ENCODE measurements at regions of chr1 and their contacts with region 1.

Region 1: GRCh38 chr1:207811920-207812720 is 60.3 kb downstream of the CD46 start:
- DNase-seq: peak; percentile 66 to 86 (median 77)
- ATAC-seq: peak; percentile 14 to 63 (median 40)
- H3K4me3 ChIP-seq: peak overlapping the region in 5 of 12 donors; percentile 5 to 35 (median 21)
- H3K27ac ChIP-seq: peak overlapping the region; percentile 56 to 98 (median 81)
- H3K4me1 ChIP-seq: peaks cover 28 to 100% (median 97%) of the 10 kb centered on the region in 12 donors
- H3K27me3 ChIP-seq: no peaks in the 10 kb centered on the region
- CTCF ChIP-seq: peak; percentile 30 to 70 (median 48)
- POLR2A ChIP-seq: no peak

Region 2: DNA sequence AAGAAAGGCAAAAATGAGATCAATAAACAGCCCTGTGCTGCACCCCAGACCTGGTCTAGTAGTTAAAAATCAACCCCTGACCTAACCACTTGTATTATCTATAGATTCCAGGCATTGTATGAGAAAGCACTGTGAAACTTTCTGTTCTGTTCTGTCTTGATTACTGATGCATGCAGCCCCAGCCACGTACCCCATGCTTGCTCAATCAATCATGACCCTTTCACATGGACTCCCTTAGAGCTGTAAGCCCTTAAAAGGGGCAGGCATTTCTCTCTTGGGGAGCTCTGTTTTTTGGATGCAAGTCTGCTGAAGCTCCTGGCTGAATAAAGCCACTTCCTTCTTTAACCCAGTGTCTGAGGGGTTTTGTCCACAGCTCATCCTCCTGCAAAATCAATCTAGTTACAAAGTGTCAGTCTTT is 123.1 kb after region 1 on chr1:
- intact Hi-C with region 1: no loop called
- DNase-seq: no peak
- ATAC-seq: no peak
- H3K4me3 ChIP-seq: no peak overlapping the region
- H3K27ac ChIP-seq: no peak overlapping the region
- H3K4me1 ChIP-seq: peaks cover 0 to 27% (median 2%) of the 10 kb centered on the region in 12 donors
- H3K27me3 ChIP-seq: no peaks in the 10 kb centered on the region
- CTCF ChIP-seq: no peak
- POLR2A ChIP-seq: no peak

Region 3: DNA sequence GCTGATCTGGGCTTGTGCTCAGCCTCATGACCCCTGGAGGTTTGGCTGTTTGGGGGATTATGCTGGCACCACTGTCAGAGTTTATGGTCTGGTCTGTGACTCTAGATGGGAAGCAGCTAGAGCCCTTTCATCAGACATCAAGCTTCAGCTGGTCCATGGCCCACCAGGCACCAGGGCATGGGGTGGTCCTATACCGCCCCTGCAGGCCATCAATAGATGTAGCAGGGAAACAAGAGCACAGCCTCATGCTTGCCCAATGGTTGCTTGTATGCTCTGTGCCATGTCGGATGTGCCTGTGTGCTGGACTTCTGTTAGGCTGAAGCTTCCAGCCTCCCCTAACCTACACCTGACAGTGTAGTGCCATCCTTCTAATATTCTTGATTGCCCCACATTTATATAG is 169.9 kb after region 1 on chr1:
- intact Hi-C with region 1: loop called in 1 of 10 experiments (anchors 10 kb)
- DNase-seq: no peak
- ATAC-seq: peak in 2 of 4 donors; percentile 49 to 65
- H3K4me3 ChIP-seq: no peak overlapping the region
- H3K27ac ChIP-seq: no peak overlapping the region
- H3K4me1 ChIP-seq: no peaks in the 10 kb centered on the region
- H3K27me3 ChIP-seq: no peaks in the 10 kb centered on the region
- CTCF ChIP-seq: peak; percentile 8 to 50 (median 27)
- POLR2A ChIP-seq: no peak